CD8-positive, alpha-beta T cell (primary cell): ENCODE measurements at regions of chrX and their contacts with region 1.

Region 1: GRCh38 chrX:119775517-119776238 is 15.8 kb downstream of the RPL39 start:
- DNase-seq: no peak
- ATAC-seq: no peak
- H3K4me3 ChIP-seq: no peak overlapping the region
- H3K4me3 Mint-ChIP-seq: peak overlapping the region; percentile 16
- H3K27ac ChIP-seq: no peak overlapping the region
- H3K27ac Mint-ChIP-seq: no peak overlapping the region
- H3K4me1 ChIP-seq: no peaks in the 10 kb centered on the region
- H3K4me1 Mint-ChIP-seq: peaks cover 3% of the 10 kb centered on the region
- H3K27me3 ChIP-seq: no peaks in the 10 kb centered on the region
- H3K27me3 Mint-ChIP-seq: no peaks in the 10 kb centered on the region
- CTCF ChIP-seq: no peak

Region 2: DNA sequence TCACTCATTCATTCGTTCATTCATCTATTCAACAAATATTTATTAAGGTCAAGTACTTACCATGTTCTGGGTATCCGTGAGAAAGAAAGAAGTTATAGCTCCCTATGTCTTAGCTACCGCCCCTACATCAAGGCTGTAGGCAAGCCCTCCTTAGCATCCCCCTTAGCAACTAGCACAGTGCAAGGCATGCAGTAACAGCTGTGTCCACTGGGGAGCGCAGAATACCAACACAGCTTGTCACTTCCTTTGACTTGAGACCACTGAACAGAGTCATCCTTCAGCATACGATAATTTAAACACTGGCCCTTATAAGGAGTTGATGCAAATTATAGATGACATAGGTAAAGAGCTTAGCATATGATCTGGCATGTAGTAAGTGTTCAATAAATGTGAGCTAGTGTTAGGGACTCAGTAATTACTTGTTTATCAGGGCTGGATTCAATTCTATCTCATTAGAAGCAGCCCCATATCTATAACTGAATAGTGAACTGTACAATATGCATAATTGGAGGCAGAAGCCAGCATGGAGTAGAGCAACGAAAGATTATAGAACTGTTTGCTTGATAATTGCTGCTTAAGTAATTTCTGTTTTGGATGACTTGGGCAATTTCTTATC is 656.8 kb before region 1 on chrX:
- CTCF ChIA-PET with region 1: no interaction called
- POLR2A ChIA-PET with region 1: no interaction called
- intact Hi-C with region 1: loop called in 1 of 2 experiments (anchors 5 kb)
- DNase-seq: peak; percentile 29 to 68 (median 48)
- ATAC-seq: peak; percentile 85
- H3K4me3 ChIP-seq: no peak overlapping the region
- H3K4me3 Mint-ChIP-seq: no peak overlapping the region
- H3K27ac ChIP-seq: no peak overlapping the region
- H3K27ac Mint-ChIP-seq: no peak overlapping the region
- H3K4me1 ChIP-seq: no peaks in the 10 kb centered on the region
- H3K4me1 Mint-ChIP-seq: no peaks in the 10 kb centered on the region
- H3K27me3 ChIP-seq: no peaks in the 10 kb centered on the region
- H3K27me3 Mint-ChIP-seq: no peaks in the 10 kb centered on the region
- CTCF ChIP-seq: peak; percentile 69

Region 3: DNA sequence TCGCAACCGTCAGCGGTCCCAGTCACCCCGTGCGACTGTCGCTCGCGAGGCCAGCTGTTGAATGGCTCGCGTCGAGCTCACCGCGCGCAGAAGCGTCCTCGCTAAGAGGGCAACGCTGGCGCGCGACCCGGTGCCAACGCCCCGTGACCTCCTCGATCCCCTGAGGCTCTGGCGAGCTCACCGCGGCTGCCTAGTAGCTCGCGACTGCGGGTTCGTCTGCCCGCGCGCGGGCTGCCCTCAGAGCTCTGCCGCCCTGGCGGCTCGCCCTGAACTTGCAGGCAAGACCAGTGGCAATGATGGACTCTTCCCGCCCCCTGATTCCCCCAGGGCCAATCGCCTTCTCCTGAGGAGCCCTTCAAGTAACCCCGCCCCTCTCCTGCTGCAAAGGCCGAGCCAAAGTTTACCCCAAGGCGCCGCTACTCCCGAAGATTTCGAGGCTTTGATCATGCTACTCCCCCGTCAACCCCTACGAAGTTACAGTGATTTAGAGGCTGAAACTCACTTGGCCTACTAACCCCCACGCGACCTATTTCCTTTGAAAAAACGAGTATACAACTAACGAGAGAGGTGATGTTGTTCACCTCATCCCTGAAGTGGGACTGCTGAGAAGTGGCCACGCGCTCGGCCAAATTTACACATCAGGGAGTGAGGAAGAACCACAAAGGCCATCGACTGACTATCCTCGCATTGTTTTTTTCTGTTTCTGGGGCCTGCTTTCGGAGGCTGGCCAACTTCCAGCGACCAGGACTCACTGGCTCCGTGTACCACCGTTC is 502.1 kb before region 1 on chrX:
- CTCF ChIA-PET with region 1: no interaction called
- POLR2A ChIA-PET with region 1: no interaction called
- intact Hi-C with region 1: no loop called
- DNase-seq: peak in 8 of 9 experiments; percentile 0 to 70 (median 45)
- ATAC-seq: peak; percentile 95
- H3K4me3 ChIP-seq: peak overlapping the region; percentile 16 to 22
- H3K4me3 Mint-ChIP-seq: peak overlapping the region; percentile 77
- H3K27ac ChIP-seq: no peak overlapping the region
- H3K27ac Mint-ChIP-seq: no peak overlapping the region
- H3K4me1 ChIP-seq: no peaks in the 10 kb centered on the region
- H3K4me1 Mint-ChIP-seq: peaks cover 8% of the 10 kb centered on the region
- H3K27me3 ChIP-seq: peaks cover 0 to 2% of the 10 kb centered on the region in 2 experiments
- H3K27me3 Mint-ChIP-seq: peaks cover 11% of the 10 kb centered on the region
- CTCF ChIP-seq: no peak

Region 4: GRCh38 chrX:119698845-119699244 is 76.8 kb before region 1 on chrX:
- CTCF ChIA-PET with region 1: no interaction called
- POLR2A ChIA-PET with region 1: no interaction called
- intact Hi-C with region 1: loop called (anchors 2 to 5 kb)
- DNase-seq: peak in 3 of 9 experiments; percentile 20 to 70 (median 60)
- ATAC-seq: peak; percentile 40
- H3K4me3 ChIP-seq: no peak overlapping the region
- H3K4me3 Mint-ChIP-seq: no peak overlapping the region
- H3K27ac ChIP-seq: no peak overlapping the region
- H3K27ac Mint-ChIP-seq: no peak overlapping the region
- H3K4me1 ChIP-seq: peaks cover 1% of the 10 kb centered on the region
- H3K4me1 Mint-ChIP-seq: peaks cover 5% of the 10 kb centered on the region
- H3K27me3 ChIP-seq: no peaks in the 10 kb centered on the region
- H3K27me3 Mint-ChIP-seq: no peaks in the 10 kb centered on the region
- CTCF ChIP-seq: peak; percentile 55

Region 5: DNA sequence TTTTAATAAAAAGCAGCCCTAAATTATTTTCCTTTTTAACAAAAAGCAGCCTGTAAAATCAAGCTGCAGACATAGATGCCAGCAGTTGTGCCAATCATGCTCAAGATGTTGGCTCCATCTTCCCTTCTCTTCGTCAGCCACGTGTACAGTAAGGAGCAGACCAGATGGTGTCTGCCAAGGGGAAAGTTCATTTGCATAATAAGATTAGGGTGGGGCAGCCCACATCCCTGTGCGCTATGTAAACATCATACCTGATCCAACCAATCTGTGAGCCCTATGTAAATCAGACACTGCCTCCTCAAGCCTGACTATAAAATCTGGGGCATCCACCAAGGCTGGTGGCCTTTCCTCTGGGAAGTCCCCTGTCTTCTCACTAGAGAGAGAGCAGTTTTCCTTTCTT is 877.3 kb after region 1 on chrX:
- CTCF ChIA-PET with region 1: no interaction called
- POLR2A ChIA-PET with region 1: no interaction called
- intact Hi-C with region 1: no loop called
- DNase-seq: no peak
- ATAC-seq: no peak
- H3K4me3 ChIP-seq: no peak overlapping the region
- H3K4me3 Mint-ChIP-seq: no peak overlapping the region
- H3K27ac ChIP-seq: no peak overlapping the region
- H3K27ac Mint-ChIP-seq: no peak overlapping the region
- H3K4me1 ChIP-seq: no peaks in the 10 kb centered on the region
- H3K4me1 Mint-ChIP-seq: no peaks in the 10 kb centered on the region
- H3K27me3 ChIP-seq: no peaks in the 10 kb centered on the region
- H3K27me3 Mint-ChIP-seq: no peaks in the 10 kb centered on the region
- CTCF ChIP-seq: no peak